B cell (primary cell): ENCODE measurements at regions of chr3 and their contacts with region 1.

Region 1: DNA sequence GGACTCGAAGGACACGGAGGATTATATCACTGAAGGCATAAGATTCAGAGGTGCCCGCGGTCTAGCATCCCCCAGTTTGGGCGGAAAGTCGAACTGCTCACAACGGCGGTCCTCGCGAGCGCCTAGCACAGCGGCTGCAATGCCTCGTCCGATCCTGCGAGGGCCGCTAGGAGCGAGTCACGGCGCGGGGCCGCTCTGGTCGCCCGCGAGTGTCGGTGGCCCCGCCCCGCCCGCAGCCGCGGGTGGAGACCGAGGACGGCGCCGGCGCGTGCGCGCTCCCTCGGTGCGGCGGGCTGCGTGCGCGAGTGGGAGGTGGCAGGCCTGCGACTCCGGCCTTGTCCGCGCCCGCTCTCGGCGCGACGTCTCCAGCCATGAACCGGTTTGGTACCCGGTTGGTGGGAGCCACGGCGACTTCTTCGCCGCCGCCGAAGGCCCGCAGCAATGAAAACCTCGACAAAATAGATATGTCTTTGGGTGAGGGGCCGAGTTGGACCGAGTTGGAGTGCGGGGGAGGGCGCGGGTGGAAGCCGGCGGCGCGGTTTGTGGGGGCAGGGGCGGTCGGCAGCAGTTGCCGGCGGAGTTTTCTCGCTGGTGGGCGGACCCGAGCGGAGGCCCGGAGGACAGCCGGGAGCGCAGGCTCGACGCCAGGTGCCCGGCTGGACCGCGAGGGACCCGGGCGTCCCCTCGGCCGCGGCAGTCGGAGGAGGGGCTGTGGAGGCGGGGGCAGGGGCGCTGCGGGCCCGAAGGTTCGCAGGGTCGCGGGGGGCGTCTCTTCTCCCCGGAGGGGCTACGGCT is at the start of gene FYTTD1:
- DNase-seq: peak; percentile 95
- ATAC-seq: peak; percentile 90
- H3K4me3 ChIP-seq: peak within 1 kb of the TSS; percentile 76 to 97 (median 83)
- H3K4me3 Mint-ChIP-seq: peak within 1 kb of the TSS; percentile 96
- H3K27ac ChIP-seq: peak within 1 kb of the TSS; percentile 88 to 94
- H3K27ac Mint-ChIP-seq: peak within 1 kb of the TSS; percentile 97
- H3K4me1 ChIP-seq: peaks cover 18 to 26% of the 10 kb centered on the region in 2 donors
- H3K4me1 Mint-ChIP-seq: peaks cover 43% of the 10 kb centered on the region
- H3K27me3 ChIP-seq: no peaks in the 10 kb centered on the region
- H3K27me3 Mint-ChIP-seq: no peaks in the 10 kb centered on the region
- CTCF ChIP-seq: peak; percentile 64
- total RNA-seq, gene FYTTD1: 110 and 121 TPM in 2 replicates

Region 2: GRCh38 chr3:197394464-197395321 is 355.1 kb before region 1 on chr3:
- CTCF ChIA-PET with region 1: no interaction called
- POLR2A ChIA-PET with region 1: no interaction called
- intact Hi-C with region 1: no loop called
- DNase-seq: no peak
- ATAC-seq: peak; percentile 53
- H3K4me3 ChIP-seq: no peak overlapping the region
- H3K4me3 Mint-ChIP-seq: no peak overlapping the region
- H3K27ac ChIP-seq: no peak overlapping the region
- H3K27ac Mint-ChIP-seq: no peak overlapping the region
- H3K4me1 ChIP-seq: no peaks in the 10 kb centered on the region
- H3K4me1 Mint-ChIP-seq: no peaks in the 10 kb centered on the region
- H3K27me3 ChIP-seq: peaks cover 0 to 8% (median 5%) of the 10 kb centered on the region in 4 experiments
- H3K27me3 Mint-ChIP-seq: peaks cover 19% of the 10 kb centered on the region
- CTCF ChIP-seq: no peak

Region 3: DNA sequence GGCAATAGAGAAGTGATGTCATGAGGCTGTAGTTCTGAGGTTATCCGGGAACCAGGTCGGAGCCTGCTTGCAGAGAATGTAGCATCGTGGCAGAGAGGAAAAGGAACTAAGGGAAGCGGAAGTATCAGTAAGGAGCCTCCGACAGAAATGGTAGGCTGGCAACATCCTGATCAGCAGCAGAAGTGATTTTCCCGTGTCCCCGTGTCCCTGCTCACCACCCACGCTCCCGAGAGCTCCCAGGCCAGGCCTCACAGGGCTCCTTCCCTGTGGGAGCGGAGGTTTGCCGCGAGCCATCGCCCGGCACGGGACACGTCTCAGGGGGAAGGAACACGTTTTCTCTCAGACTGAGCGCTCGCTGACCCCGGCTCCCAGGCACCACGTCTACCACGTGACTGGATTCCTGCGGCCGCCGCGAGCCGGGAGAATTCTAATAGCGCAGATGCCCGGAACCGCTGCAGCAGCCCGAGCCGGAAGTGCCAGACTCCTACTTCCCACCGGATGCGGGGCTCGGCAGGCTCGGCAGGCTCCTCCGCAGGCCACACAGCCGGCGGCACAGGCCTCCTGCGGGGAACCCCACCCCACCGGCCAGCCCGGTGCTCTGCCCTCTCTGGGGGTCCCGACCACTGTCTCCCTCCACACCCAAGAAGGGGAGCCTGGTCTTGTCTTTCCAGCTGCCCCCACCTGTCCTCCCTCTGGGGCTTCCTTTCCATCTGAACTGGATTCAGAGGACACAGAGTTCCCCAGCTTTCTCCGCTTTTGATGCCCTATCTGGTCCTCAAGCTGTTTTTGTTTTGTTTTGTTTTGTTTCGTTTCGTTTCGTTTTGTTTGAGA is 293.3 kb before region 1 on chr3:
- CTCF ChIA-PET with region 1: no interaction called
- POLR2A ChIA-PET with region 1: no interaction called
- intact Hi-C with region 1: no loop called
- DNase-seq: peak; percentile 60
- ATAC-seq: peak; percentile 47
- H3K4me3 ChIP-seq: peak overlapping the region; percentile 68 to 93 (median 84)
- H3K4me3 Mint-ChIP-seq: peak overlapping the region; percentile 88
- H3K27ac ChIP-seq: peak overlapping the region; percentile 27 to 70
- H3K27ac Mint-ChIP-seq: peak overlapping the region; percentile 83
- H3K4me1 ChIP-seq: peaks cover 10 to 19% of the 10 kb centered on the region in 2 donors
- H3K4me1 Mint-ChIP-seq: peaks cover 14% of the 10 kb centered on the region
- H3K27me3 ChIP-seq: peaks cover 0 to 6% (median 0%) of the 10 kb centered on the region in 4 experiments
- H3K27me3 Mint-ChIP-seq: no peaks in the 10 kb centered on the region
- CTCF ChIP-seq: no peak

Region 4: DNA sequence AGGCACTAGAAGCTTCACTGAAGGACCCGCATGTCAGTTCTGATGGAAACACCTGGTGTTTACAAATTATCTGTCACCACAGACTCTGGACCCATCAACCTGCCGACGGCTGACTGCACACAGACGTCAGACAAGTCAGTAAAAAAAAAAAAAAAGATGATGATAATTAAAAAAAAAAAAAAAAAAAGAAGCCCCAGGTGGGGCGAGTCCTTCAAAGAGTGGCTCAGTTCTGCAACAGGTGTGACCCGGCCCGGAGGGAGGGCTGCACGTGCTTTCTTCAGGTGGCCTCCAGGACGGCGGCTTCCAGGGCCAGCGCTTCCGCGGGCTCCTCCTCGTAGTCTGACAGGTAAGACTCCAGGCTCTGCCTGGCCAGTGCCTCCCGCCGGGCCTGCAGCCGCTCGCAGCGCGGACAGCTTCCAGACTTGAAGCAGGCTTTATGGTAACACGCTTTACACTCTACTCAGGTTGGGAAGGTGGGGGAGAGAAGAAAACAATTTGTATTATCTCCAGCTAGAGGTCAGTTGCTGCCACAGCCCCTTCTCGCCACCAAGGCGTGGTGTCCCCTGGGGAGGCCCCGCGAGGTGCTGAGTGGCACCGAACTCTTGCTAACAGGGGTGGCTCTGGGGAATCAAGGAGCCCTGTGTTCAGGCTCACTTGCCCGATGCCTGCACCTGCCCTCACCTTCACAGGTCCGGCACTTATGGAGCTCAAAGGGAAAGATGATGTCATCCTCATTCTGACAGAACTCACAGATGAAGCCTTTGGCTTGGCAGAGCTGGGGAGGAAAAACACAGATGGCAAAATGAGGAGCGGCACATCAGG is 74.8 kb before region 1 on chr3:
- CTCF ChIA-PET with region 1: interaction called, 6 read pairs
- POLR2A ChIA-PET with region 1: interaction called, 5 read pairs
- intact Hi-C with region 1: loop called (anchors 2 kb)
- DNase-seq: peak; percentile 80
- ATAC-seq: peak; percentile 91
- H3K4me3 ChIP-seq: no peak overlapping the region
- H3K4me3 Mint-ChIP-seq: peak overlapping the region; percentile 89
- H3K27ac ChIP-seq: peak overlapping the region; percentile 73
- H3K27ac Mint-ChIP-seq: peak overlapping the region; percentile 96
- H3K4me1 ChIP-seq: peaks cover 3 to 21% of the 10 kb centered on the region in 2 donors
- H3K4me1 Mint-ChIP-seq: peaks cover 47% of the 10 kb centered on the region
- H3K27me3 ChIP-seq: no peaks in the 10 kb centered on the region
- H3K27me3 Mint-ChIP-seq: no peaks in the 10 kb centered on the region
- CTCF ChIP-seq: no peak

Region 5: DNA sequence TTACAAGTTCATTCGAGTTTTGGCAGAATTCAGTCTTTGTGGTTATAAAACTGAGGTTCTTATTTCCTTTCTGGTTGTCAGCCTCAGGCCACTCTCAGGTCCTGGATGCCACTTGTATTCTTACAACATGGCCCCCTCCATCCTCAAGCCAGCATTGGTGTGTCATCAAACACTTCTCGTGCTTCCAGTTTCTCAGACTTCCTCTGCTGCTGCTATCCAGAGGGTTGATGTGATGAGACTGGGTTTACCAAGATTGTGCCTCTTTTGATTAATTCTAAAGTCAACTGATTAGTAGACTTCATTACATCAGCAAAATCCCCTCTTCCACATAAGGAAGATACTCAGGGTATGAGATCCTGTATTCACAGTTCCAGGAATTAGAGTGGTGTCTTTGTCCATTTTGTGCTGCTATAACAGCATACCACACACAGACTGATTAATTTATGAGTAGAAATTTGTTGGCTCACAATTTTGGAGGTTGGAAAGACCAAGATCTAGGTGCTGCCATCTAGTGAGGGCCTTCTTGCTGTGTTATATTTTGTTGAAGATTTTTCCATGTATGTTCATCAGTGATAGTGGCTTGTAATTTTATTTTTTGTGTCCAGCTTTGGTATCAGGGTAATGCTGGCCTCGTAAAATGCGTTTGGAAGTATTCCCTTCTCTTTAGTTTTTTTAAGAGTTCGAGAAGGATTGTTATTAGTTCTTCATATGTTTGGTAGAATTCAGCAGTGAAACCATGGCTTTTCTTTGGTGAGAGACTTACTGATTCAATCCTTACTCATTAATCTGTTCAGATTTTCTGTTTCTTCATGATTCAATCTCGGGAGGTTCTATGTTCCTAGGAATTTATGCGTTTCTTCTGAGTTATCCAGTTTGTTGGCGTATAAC is 52.3 kb after region 1 on chr3:
- CTCF ChIA-PET with region 1: interaction called, 7 read pairs
- POLR2A ChIA-PET with region 1: no interaction called
- intact Hi-C with region 1: loop called (anchors 1 kb)
- DNase-seq: peak; percentile 66
- ATAC-seq: peak; percentile 54
- H3K4me3 ChIP-seq: no peak overlapping the region
- H3K4me3 Mint-ChIP-seq: no peak overlapping the region
- H3K27ac ChIP-seq: peak overlapping the region in 1 of 2 donors; percentile 27
- H3K27ac Mint-ChIP-seq: peak overlapping the region; percentile 12
- H3K4me1 ChIP-seq: peaks cover 15 to 28% of the 10 kb centered on the region in 2 donors
- H3K4me1 Mint-ChIP-seq: peaks cover 51% of the 10 kb centered on the region
- H3K27me3 ChIP-seq: no peaks in the 10 kb centered on the region
- H3K27me3 Mint-ChIP-seq: no peaks in the 10 kb centered on the region
- CTCF ChIP-seq: peak; percentile 80